Activated T-helper 1 cell treated with anti-CD3 and anti-CD28 coated beads, Interleukin-12 subunit alpha, Interleukin-12 subunit beta, Interleukin-2, Interleukin-4 antibody, amounts not matched to agents 30 ng/mL and 10 ng/mL and 1 ng/mL, durations not matched to agents 14 hours and 24 hours and 36 hours (primary cell): ENCODE measurements at regions of chr22 and their contacts with region 1.

Region 1: DNA sequence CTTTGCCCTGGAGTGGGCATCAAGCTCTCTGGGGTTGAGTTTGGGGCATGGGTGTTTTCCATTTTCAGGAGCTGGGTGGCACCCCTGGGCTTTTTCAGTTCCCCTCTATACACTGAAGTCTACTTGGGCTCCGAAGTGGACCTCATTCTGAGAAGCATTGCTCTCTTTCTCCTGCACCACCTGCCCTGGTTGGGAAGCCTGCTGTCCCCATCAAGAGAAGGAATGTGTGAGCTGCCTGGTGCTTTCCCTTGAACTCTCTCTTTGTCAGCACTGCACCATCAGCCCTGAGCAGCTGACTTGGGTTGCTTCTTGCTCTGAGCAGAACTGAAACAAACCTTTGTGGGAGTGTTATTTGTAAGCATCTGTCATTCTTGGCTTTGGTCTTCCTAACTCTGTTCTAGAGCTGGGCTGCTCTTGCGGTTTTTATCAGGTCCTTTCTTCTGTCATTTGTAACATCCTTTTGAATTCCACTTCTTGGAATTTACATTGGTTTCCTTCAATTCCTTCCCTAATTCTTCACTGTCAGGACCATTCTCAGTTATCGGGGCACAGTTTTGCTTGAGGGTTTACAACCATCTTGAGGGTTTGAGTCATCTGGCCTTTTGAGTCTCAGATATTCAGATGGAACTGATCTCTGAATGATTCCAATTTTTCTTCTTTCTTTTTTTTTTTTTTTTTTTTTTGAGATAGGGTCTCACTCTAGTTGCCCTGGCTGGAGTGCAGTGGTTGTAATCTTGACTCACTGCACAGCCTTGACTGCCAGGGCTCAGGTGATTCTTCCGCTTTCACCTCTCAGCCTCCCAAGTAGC is 20.5 kb downstream of the UBE2L3 start:
- DNase-seq: peak; percentile 38
- H3K4me3 Mint-ChIP-seq: peak overlapping the region; percentile 13
- H3K27ac Mint-ChIP-seq: peak overlapping the region; percentile 85
- H3K4me1 Mint-ChIP-seq: peaks cover 47% of the 10 kb centered on the region
- H3K27me3 Mint-ChIP-seq: no peaks in the 10 kb centered on the region

Region 2: GRCh38 chr22:21567456-21568346 is 20.3 kb before region 1 on chr22 and contains the start of gene UBE2L3:
- intact Hi-C with region 1: loop called (anchors 1 kb)
- DNase-seq: peak; percentile 80
- H3K4me3 Mint-ChIP-seq: peak within 1 kb of the TSS; percentile 96
- H3K27ac Mint-ChIP-seq: peak within 1 kb of the TSS; percentile 95
- H3K4me1 Mint-ChIP-seq: peaks cover 40% of the 10 kb centered on the region
- H3K27me3 Mint-ChIP-seq: no peaks in the 10 kb centered on the region
- total RNA-seq, gene UBE2L3: 58.3 and 62.4 TPM in 2 replicates

Region 3: DNA sequence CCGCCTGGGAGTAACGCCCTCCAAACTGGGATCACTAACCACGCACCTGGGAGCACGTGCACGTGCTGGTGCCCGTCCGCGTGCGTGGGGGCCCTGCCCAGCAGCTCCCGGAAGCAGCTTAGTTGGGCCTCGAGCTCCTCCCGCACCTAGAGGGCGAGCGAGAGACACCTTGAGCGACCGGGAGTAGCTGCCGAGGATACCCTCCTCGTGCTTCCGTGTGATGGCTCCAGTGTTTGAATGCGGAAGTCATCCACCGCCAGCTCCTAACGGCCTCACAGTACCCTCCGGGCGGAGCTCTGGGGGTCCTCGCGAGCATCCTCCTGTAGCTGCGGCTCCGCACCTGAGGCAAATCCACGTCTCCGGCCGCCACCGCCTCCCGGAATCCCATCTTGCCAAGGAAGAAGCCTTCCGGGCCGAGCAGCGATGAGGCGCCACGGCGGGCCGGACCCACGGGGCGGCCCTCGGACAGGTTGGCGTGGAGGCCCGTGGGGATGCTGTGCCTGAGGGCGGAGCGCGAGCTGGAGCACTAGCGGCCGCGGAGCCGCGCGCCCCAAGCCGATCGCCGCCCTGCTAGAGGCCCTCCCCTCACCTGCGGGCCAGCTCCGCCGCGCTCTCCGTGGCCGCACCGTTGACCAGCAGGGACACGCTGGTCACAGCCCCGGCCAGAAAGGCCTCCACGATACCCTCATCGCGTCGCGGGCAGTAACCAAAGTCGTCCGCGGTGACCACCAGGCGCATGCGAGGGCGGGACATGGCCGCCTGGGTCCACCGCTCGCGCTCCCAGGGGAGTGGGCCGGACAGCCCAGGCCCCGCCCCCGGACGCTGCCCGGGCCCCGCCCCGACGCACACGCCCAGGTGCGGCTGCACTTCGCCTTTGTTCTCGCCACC is 41.5 kb after region 1 on chr22 and contains the start of gene YDJC:
- intact Hi-C with region 1: loop called (anchors 2 kb)
- DNase-seq: peak; percentile 93
- H3K4me3 Mint-ChIP-seq: peak within 1 kb of the TSS; percentile 91
- H3K27ac Mint-ChIP-seq: peak within 1 kb of the TSS; percentile 92
- H3K4me1 Mint-ChIP-seq: peaks cover 28% of the 10 kb centered on the region
- H3K27me3 Mint-ChIP-seq: no peaks in the 10 kb centered on the region
- total RNA-seq, gene YDJC: 51.7 and 51.8 TPM in 2 replicates